ENCODE measurements at regions of chr20 and their contacts with region 1.

Region 1: GRCh38 chr20:57596998-57597939 is 23.0 kb downstream of the ZBP1 start:
- DNase-seq: no peak
- H3K4me3 ChIP-seq: no peak overlapping the region
- CTCF ChIP-seq: peak; percentile 90

Region 2: GRCh38 chr20:56957737-56958553 is 639.3 kb before region 1 on chr20:
- CTCF ChIA-PET with region 1: no interaction called
- POLR2A ChIA-PET with region 1: no interaction called
- DNase-seq: no peak
- H3K4me3 ChIP-seq: no peak overlapping the region
- CTCF ChIP-seq: no peak

Region 3: DNA sequence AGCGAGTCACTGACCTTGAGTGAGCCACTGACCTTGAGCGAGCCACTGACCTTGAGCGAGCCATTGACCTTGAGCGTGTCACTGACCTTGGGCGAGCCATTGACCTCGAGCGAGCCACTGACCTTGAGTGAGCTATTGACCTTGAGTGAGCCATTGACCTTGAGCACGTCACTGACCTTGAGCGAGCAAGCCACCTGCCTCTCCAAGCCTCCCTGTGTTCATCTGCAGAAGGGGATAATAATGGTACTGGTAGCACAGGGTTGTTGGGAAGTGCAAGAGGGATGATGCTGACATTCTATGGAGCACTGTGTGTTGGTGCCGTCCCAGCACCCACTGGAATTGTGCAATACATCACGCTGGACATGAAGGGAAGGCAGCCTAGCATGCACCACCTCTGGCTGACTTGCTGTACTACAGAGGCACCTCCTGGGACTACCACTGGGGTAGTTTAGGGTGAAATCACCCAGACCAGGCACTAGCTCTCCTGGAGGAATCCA is 132.5 kb before region 1 on chr20:
- CTCF ChIA-PET with region 1: no interaction called
- POLR2A ChIA-PET with region 1: no interaction called
- DNase-seq: no peak
- H3K4me3 ChIP-seq: no peak overlapping the region
- CTCF ChIP-seq: peak; percentile 2

Region 4: GRCh38 chr20:57514273-57514751 is 83.0 kb before region 1 on chr20:
- CTCF ChIA-PET with region 1: interaction called, 303 read pairs
- POLR2A ChIA-PET with region 1: no interaction called
- DNase-seq: peak; percentile 12
- H3K4me3 ChIP-seq: no peak overlapping the region
- CTCF ChIP-seq: peak; percentile 69

Region 5: DNA sequence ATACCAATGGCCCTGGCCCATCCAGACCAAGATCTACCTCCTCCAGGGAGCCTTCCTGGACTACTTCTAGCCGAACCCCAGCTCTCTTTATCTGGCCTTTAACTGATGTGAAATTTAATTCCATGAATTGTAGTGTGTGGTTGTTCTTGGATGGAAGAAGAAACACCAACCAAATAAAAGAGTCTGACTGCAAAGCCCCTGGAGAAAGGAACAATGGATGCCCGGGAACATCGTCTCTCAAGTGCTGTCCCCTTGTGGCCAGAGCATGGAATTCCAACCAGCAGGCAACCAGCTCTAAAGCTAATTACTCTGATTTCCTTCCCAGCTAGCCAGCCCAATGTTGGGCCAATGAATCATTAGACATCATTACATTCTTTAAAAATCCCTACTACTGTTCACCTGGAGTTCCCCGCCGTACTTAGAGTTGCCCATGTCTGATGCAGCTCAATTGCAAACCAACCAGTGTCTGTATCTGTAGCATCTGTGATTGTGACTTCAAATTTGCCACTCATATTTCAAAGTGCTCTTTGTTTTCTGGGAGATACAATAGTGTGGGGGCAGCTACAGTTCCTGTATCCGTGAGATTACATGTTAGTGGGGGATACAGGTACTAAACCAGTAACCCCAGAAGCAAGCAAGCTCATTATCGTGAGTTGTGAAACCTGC is 490.1 kb after region 1 on chr20:
- CTCF ChIA-PET with region 1: interaction called, 30 read pairs
- POLR2A ChIA-PET with region 1: no interaction called
- DNase-seq: no peak
- H3K4me3 ChIP-seq: no peak overlapping the region
- CTCF ChIP-seq: peak; percentile 84

Region 6: GRCh38 chr20:58196008-58196820 is 598.9 kb after region 1 on chr20:
- CTCF ChIA-PET with region 1: interaction called, 25 read pairs
- POLR2A ChIA-PET with region 1: no interaction called
- DNase-seq: no peak
- H3K4me3 ChIP-seq: no peak overlapping the region
- CTCF ChIP-seq: no peak

Region 7: DNA sequence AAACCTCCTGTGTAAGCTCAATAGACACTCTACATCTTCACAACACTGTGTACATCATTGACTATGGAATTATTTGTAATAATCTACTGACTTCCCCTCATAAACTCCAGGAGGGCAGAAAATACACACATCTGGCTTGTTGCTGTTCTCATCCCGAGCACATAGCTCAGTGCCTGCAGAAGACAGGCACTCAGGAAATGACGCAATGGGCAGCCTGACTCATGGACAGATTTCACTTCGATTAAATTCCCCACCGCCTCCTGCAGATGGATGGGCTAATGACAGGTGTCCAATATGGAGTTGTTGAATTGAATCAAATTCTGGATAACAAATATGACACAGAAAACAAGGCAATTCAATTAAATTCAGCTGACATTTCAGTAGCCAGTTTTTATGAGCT is 622.0 kb after region 1 on chr20:
- CTCF ChIA-PET with region 1: interaction called, 12 read pairs
- POLR2A ChIA-PET with region 1: no interaction called
- DNase-seq: peak; percentile 57
- H3K4me3 ChIP-seq: no peak overlapping the region; the same call in 1 of the 2 replicates
- CTCF ChIP-seq: no peak

Measured in AG04449 (cell line).